Caco-2 (cell line): ENCODE measurements at regions of chrX and their contacts with region 1.

Region 1: DNA sequence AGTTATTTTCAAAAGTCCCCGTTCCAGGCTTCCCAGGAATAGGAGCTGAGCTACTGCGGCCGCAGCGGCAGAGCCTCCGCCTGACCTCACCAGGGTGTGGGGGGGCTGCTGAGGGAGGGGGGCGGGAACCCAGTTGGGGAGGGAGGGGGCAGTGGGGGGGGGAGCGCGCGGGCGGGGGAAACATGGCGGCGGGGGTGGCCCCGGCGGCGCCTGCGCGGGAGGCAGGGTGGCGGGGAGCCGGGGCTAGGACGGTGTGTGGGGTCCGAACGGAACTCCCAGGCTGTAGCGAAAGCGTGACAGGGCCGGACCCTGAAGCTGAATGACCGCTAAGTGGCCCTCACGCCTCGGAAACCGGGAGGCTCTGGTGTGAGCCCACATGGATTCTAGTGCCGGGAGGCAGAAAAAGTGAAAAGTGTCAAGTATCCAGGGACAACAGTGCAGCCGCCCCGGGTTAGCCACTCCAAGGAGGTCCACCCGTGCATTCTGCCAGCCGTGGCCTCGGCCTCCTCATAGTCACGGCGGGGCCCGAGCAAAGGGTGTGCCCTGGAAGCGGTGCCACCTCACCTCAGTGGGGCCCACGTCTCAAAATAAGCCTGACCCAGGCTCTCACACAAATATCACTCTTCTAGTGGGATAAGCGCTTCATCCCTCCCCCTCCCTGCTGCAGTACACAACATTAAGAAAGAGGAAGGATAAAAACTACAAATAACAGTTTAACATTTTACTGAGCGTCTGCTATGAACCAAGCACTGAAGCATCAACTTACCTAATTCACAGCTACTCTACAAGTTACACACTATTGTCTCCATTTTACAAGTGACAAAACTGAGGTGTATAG is at the start of gene KLHL13:
- DNase-seq: peak; percentile 49 to 50
- H3K4me3 ChIP-seq: peak within 1 kb of the TSS; percentile 79
- H3K4me3 Mint-ChIP-seq: peak within 1 kb of the TSS; percentile 84
- H3K27ac Mint-ChIP-seq: peak within 1 kb of the TSS; percentile 42
- H3K4me1 ChIP-seq: no peaks in the 10 kb centered on the region
- H3K4me1 Mint-ChIP-seq: peaks cover 19% of the 10 kb centered on the region
- H3K27me3 ChIP-seq: no peaks in the 10 kb centered on the region
- H3K27me3 Mint-ChIP-seq: no peaks in the 10 kb centered on the region
- CTCF ChIP-seq: peak in 1 of 2 experiments; percentile 15
- total RNA-seq, gene KLHL13: 8.7 and 9.1 TPM in 2 replicates

Region 2: GRCh38 chrX:118156254-118156952 is 39.5 kb after region 1 on chrX:
- CTCF ChIA-PET with region 1: no interaction called
- POLR2A ChIA-PET with region 1: no interaction called
- intact Hi-C with region 1: loop called (anchors 2 kb)
- DNase-seq: peak; percentile 37 to 39
- H3K4me3 ChIP-seq: no peak overlapping the region
- H3K4me3 Mint-ChIP-seq: peak overlapping the region; percentile 22
- H3K27ac Mint-ChIP-seq: peak overlapping the region; percentile 84
- H3K4me1 ChIP-seq: peaks cover 19% of the 10 kb centered on the region
- H3K4me1 Mint-ChIP-seq: peaks cover 14% of the 10 kb centered on the region
- H3K27me3 ChIP-seq: no peaks in the 10 kb centered on the region
- H3K27me3 Mint-ChIP-seq: no peaks in the 10 kb centered on the region
- CTCF ChIP-seq: no peak

Region 3: DNA sequence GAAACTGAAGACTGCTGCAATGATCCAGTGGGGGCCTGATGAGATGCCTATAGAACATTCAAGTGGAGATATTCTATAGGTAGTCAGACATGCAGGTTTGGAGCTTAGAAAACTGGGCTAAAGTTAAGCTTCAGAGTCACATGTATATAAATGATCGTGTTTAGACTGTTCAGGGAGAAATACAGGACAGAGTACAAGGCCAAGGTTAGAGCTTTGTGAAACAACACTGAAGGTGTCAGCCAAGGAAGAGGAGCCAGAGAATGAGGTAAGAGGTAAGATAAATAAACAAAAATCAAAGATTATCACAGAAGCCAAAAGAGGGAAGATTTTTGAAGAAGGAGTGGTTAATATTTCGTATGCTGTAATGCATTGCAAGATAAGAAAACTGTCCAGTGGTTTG is 57.6 kb after region 1 on chrX:
- CTCF ChIA-PET with region 1: no interaction called
- POLR2A ChIA-PET with region 1: no interaction called
- intact Hi-C with region 1: loop called (anchors 5 kb)
- DNase-seq: no peak
- H3K4me3 ChIP-seq: no peak overlapping the region
- H3K4me3 Mint-ChIP-seq: no peak overlapping the region
- H3K27ac Mint-ChIP-seq: no peak overlapping the region
- H3K4me1 ChIP-seq: peaks cover 12% of the 10 kb centered on the region
- H3K4me1 Mint-ChIP-seq: peaks cover 17% of the 10 kb centered on the region
- H3K27me3 ChIP-seq: no peaks in the 10 kb centered on the region
- H3K27me3 Mint-ChIP-seq: no peaks in the 10 kb centered on the region
- CTCF ChIP-seq: no peak

Region 4: DNA sequence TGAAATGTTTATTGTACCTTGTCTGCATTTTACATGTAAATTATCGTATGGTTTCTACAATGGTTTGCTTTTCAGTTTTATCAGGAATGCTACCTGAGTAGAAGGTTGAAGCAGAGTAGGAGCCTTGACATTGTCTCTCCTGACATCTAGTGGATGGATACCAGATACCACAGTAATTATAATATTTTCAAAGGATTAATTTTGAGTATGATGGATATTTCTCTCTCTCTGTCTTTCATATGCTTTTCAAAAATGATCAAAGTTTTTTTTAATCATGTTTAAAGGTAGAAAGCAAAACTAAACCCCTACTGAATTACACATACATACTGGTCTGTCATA is 109.1 kb after region 1 on chrX:
- CTCF ChIA-PET with region 1: no interaction called
- POLR2A ChIA-PET with region 1: no interaction called
- intact Hi-C with region 1: loop called (anchors 1 kb)
- DNase-seq: peak in 1 of 2 experiments; percentile 3
- H3K4me3 ChIP-seq: no peak overlapping the region
- H3K4me3 Mint-ChIP-seq: no peak overlapping the region
- H3K27ac Mint-ChIP-seq: no peak overlapping the region
- H3K4me1 ChIP-seq: no peaks in the 10 kb centered on the region
- H3K4me1 Mint-ChIP-seq: no peaks in the 10 kb centered on the region
- H3K27me3 ChIP-seq: no peaks in the 10 kb centered on the region
- H3K27me3 Mint-ChIP-seq: no peaks in the 10 kb centered on the region
- CTCF ChIP-seq: peak in 1 of 2 experiments; percentile 45